Activated CD8-positive, alpha-beta memory T cell treated with anti-CD3 and anti-CD28 coated beads, Interleukin-2, amount 10 ng/mL, durations not matched to agents 7 days and 5 days (primary cell): ENCODE measurements at regions of chr11 and their contacts with region 1.

Region 1: GRCh38 chr11:1832211-1832919 is 2.4 kb upstream of the SYT8 start:
- DNase-seq: peak; percentile 71
- ATAC-seq: peak; percentile 83
- H3K4me3 Mint-ChIP-seq: no peak overlapping the region
- H3K27ac Mint-ChIP-seq: no peak overlapping the region
- H3K4me1 Mint-ChIP-seq: peaks cover 2% of the 10 kb centered on the region
- H3K27me3 Mint-ChIP-seq: peaks cover 9% of the 10 kb centered on the region

Region 2: DNA sequence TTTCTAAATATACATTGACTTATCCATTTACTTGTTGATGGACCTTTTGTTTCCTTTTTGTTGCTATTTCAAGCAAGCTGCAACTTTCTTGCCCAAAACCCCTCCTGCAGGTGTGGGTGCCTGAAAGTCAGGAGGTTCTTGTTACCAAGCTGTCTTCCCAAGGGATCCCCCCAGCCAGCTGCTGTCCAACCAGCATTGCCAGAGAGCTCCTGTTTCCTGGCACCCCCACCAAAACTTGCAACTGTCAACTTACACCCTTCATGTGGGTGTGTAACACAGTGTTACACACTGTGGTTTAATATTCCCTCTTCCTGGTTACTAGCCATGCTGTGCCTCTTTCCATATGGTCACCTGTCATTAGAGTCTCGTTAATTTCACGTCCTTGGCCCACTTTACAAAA is 245.7 kb before region 1 on chr11:
- CTCF ChIA-PET with region 1: no interaction called
- DNase-seq: no peak
- ATAC-seq: no peak
- H3K4me3 Mint-ChIP-seq: no peak overlapping the region
- H3K27ac Mint-ChIP-seq: no peak overlapping the region
- H3K4me1 Mint-ChIP-seq: peaks cover 11% of the 10 kb centered on the region
- H3K27me3 Mint-ChIP-seq: peaks cover 16% of the 10 kb centered on the region

Region 3: GRCh38 chr11:1701091-1701807 is 131.1 kb before region 1 on chr11:
- CTCF ChIA-PET with region 1: interaction called, 55 read pairs
- DNase-seq: peak; percentile 61
- ATAC-seq: peak; percentile 66
- H3K4me3 Mint-ChIP-seq: no peak overlapping the region
- H3K27ac Mint-ChIP-seq: peak overlapping the region; percentile 59
- H3K4me1 Mint-ChIP-seq: peaks cover 42% of the 10 kb centered on the region
- H3K27me3 Mint-ChIP-seq: peaks cover 26% of the 10 kb centered on the region

Region 4: GRCh38 chr11:1733716-1734640 is 98.4 kb before region 1 on chr11:
- CTCF ChIA-PET with region 1: interaction called, 16 read pairs
- DNase-seq: no peak
- ATAC-seq: no peak
- H3K4me3 Mint-ChIP-seq: no peak overlapping the region
- H3K27ac Mint-ChIP-seq: no peak overlapping the region
- H3K4me1 Mint-ChIP-seq: peaks cover 38% of the 10 kb centered on the region
- H3K27me3 Mint-ChIP-seq: peaks cover 36% of the 10 kb centered on the region

Region 5: GRCh38 chr11:1782831-1783724 is 49.3 kb before region 1 on chr11:
- CTCF ChIA-PET with region 1: interaction called, 12 read pairs
- DNase-seq: no peak
- ATAC-seq: no peak
- H3K4me3 Mint-ChIP-seq: no peak overlapping the region
- H3K27ac Mint-ChIP-seq: no peak overlapping the region
- H3K4me1 Mint-ChIP-seq: peaks cover 8% of the 10 kb centered on the region
- H3K27me3 Mint-ChIP-seq: no peaks in the 10 kb centered on the region

Region 6: GRCh38 chr11:1882519-1883238 is 50.3 kb after region 1 on chr11:
- CTCF ChIA-PET with region 1: interaction called, 10 read pairs
- DNase-seq: peak; percentile 77
- ATAC-seq: peak; percentile 91
- H3K4me3 Mint-ChIP-seq: no peak overlapping the region
- H3K27ac Mint-ChIP-seq: no peak overlapping the region
- H3K4me1 Mint-ChIP-seq: peaks cover 5% of the 10 kb centered on the region
- H3K27me3 Mint-ChIP-seq: no peaks in the 10 kb centered on the region

Region 7: DNA sequence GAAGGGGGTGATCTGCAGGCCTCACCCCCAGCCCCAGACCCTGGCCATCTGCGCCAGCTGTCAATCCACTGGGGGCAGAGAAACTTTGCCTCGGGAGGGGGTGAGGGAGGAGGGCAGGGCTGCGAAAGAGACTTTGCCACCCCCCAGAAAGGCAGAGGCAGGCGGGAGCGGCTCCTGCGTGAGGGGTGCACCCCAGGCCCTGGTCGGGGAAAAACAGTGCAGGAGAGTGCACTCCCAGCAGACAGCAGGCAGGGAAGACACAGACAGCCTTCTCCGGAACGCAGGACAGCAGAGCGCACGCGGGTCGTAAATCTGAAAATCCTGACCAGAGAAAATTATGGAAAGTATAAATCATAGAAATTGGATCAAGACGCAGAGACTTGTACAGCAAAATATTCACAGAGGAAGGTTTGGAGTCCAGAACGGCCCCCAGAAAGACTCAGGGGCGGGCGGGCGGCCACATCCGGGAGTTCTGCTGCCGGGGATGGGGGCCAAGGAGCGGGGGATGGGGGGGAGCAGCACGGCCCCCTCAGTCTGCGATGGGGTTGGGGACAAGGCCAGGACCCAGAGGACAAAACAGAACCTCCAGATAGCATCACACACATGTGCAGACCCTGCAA is 106.8 kb after region 1 on chr11:
- CTCF ChIA-PET with region 1: no interaction called
- DNase-seq: peak; percentile 61
- ATAC-seq: peak; percentile 70
- H3K4me3 Mint-ChIP-seq: no peak overlapping the region
- H3K27ac Mint-ChIP-seq: no peak overlapping the region
- H3K4me1 Mint-ChIP-seq: peaks cover 6% of the 10 kb centered on the region
- H3K27me3 Mint-ChIP-seq: no peaks in the 10 kb centered on the region

Region 8: GRCh38 chr11:2151500-2152257 is 319.3 kb after region 1 on chr11:
- CTCF ChIA-PET with region 1: interaction called, 61 read pairs
- DNase-seq: peak; percentile 85
- ATAC-seq: peak; percentile 77
- H3K4me3 Mint-ChIP-seq: no peak overlapping the region
- H3K27ac Mint-ChIP-seq: no peak overlapping the region
- H3K4me1 Mint-ChIP-seq: peaks cover 3% of the 10 kb centered on the region
- H3K27me3 Mint-ChIP-seq: peaks cover 37% of the 10 kb centered on the region